ENCODE measurements at regions of chr11 and their contacts with region 1.

Region 1: GRCh38 chr11:19557720-19558140 is 154.9 kb upstream of the NAV2 start:
- DNase-seq: peak in 33 of 35 experiments; percentile 4 to 70 (median 47)
- ATAC-seq: peak in 1 of 4 experiments; percentile 60
- H3K4me3 ChIP-seq: no peak overlapping the region
- H3K4me3 Mint-ChIP-seq: no peak overlapping the region
- H3K27ac ChIP-seq: no peak overlapping the region
- H3K27ac Mint-ChIP-seq: no peak overlapping the region
- H3K4me1 ChIP-seq: no peaks in the 10 kb centered on the region
- H3K4me1 Mint-ChIP-seq: peaks cover 0 to 4% (median 2%) of the 10 kb centered on the region in 3 donors
- H3K27me3 ChIP-seq: peaks cover 0 to 16% of the 10 kb centered on the region in 2 experiments
- H3K27me3 Mint-ChIP-seq: peaks cover 13 to 17% of the 10 kb centered on the region in 2 donors

Region 2: DNA sequence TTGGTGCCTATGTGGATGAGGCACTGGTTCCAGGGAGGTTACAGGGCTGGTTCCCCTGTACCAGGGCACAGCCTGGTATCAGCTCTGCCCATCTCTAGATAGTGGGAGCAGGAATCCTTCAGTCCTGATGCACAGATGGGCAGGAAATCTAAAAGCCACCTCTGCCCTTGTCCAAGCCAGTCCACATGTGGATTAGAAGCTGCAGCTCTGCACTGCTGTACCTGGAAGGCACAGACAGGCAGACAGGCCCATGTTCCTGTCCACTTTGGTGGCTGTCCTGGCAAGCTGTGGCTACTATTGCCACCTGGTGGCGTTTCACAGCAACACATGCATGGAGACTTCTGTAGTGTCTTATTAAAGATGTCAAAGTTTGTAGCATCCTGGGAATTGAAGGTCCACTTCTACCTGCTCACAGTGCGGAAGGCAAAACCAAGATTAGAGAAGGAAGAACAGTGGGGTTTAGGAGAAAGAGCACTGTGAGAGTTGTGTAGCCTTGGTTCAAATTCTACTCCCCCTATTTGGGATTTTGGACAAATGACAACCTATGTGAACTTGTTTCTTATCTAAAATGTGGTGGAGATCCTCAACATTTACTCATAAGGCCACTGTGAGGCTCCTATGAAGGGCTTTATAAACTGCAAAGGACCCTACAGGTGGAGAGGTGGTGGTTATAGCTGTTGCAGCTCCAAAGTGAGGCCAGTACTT is 185.0 kb after region 1 on chr11:
- CTCF ChIA-PET with region 1: interaction called, 12 to 29 read pairs
- POLR2A ChIA-PET with region 1: no interaction called
- DNase-seq: peak; percentile 12 to 75 (median 52)
- ATAC-seq: peak; percentile 45 to 91 (median 66)
- H3K4me3 ChIP-seq: no peak overlapping the region
- H3K4me3 Mint-ChIP-seq: no peak overlapping the region
- H3K27ac ChIP-seq: no peak overlapping the region
- H3K27ac Mint-ChIP-seq: no peak overlapping the region
- H3K4me1 ChIP-seq: no peaks in the 10 kb centered on the region
- H3K4me1 Mint-ChIP-seq: no peaks in the 10 kb centered on the region
- H3K27me3 ChIP-seq: peaks cover 0 to 5% of the 10 kb centered on the region in 2 experiments
- H3K27me3 Mint-ChIP-seq: peaks cover 0 to 7% of the 10 kb centered on the region in 2 donors